IMR-90 (cell line): ENCODE measurements at regions of chr11 and their contacts with region 1.

Region 1: DNA sequence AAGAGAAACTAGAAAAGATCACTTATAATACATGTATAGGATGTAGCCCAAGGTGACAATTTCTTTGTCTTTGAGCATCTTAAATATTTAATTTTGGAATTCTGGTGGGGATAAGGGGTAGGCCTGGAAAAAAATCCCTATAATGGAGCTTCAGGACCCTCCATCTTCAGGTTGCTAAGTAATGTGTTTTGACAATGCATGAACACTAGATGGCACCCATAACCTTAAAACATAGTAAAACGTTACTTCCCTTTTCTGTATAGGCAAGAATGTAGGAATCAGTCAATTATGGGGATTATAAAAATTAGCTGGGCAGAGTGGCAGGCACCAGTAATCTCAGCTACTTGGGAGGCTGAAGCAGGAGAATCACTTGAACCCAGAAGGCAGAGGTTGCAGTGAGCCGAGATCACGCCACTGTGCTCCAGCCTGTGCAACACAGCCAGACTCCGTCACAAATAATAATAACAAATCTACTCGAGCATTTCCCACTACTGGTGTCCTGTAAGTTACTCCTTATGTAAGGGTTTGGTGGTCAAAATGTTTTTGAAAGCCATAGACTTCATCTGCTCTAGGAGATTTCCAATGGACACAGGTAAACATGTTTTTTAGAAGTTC is 541.9 kb upstream of the CCDC90B start:
- DNase-seq: peak; percentile 52
- ATAC-seq: peak; percentile 83
- H3K4me3 ChIP-seq: peak overlapping the region; percentile 29; the same call in 1 of the 2 replicates
- H3K27ac ChIP-seq: peak overlapping the region; percentile 74
- H3K4me1 ChIP-seq: peaks cover 8% of the 10 kb centered on the region
- H3K27me3 ChIP-seq: no peaks in the 10 kb centered on the region
- CTCF ChIP-seq: peak; percentile 60
- POLR2A ChIP-seq: no peak
- RAD21 ChIP-seq: peak; percentile 50

Region 2: GRCh38 chr11:83599066-83599465 is 229.0 kb before region 1 on chr11:
- CTCF ChIA-PET with region 1: no interaction called
- POLR2A ChIA-PET with region 1: no interaction called
- dilution Hi-C with region 1: no loop called
- in situ Hi-C with region 1: no loop called
- intact Hi-C with region 1: no loop called
- DNase-seq: no peak
- ATAC-seq: no peak
- H3K4me3 ChIP-seq: no peak overlapping the region
- H3K27ac ChIP-seq: no peak overlapping the region
- H3K4me1 ChIP-seq: no peaks in the 10 kb centered on the region
- H3K27me3 ChIP-seq: peaks cover 2% of the 10 kb centered on the region; the same call in 1 of the 2 replicates
- CTCF ChIP-seq: no peak
- POLR2A ChIP-seq: no peak
- RAD21 ChIP-seq: no peak

Region 3: GRCh38 chr11:84524422-84525051 is 696.5 kb after region 1 on chr11:
- CTCF ChIA-PET with region 1: no interaction called
- POLR2A ChIA-PET with region 1: no interaction called
- dilution Hi-C with region 1: no loop called
- in situ Hi-C with region 1: no loop called
- intact Hi-C with region 1: loop called (anchors 2 kb)
- DNase-seq: peak; percentile 25
- ATAC-seq: no peak
- H3K4me3 ChIP-seq: no peak overlapping the region
- H3K27ac ChIP-seq: no peak overlapping the region
- H3K4me1 ChIP-seq: no peaks in the 10 kb centered on the region
- H3K27me3 ChIP-seq: no peaks in the 10 kb centered on the region
- CTCF ChIP-seq: peak; percentile 49
- POLR2A ChIP-seq: no peak
- RAD21 ChIP-seq: peak; percentile 52

Region 4: DNA sequence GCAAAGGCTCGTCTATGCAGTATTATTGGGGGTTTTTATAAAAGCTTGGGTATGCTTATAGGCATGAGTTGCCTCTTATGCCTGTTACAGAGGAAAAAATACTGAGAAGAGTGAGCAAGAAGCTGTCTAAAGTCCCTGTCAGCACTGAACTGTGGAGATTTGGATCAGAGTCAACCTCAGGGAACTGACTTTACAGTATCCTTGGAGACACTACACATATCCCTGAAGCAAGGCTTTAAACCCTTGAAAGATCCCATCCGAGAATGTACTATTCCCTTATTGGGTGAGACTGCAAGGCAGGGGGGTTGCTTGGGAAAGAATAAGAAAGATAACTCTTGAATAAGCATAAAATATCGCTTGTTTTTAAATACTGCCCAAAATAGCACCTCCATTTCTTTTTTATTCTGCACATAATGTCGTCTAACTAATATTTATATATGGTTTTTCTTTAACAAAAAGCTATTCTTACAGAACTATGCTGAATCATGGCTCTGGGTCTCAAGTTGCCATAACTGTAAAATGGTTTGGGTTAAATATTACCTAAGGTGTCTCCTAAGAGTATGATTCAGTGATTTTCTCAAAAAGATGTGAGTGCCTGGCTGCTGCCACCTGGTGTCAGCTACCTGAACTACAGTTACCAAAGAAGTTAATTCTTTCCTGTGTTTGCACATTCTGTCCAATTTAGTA is 736.3 kb after region 1 on chr11:
- CTCF ChIA-PET with region 1: interaction called, 6 read pairs
- POLR2A ChIA-PET with region 1: no interaction called
- dilution Hi-C with region 1: no loop called
- in situ Hi-C with region 1: loop called (anchors 10 kb)
- intact Hi-C with region 1: loop called (anchors 2 kb)
- DNase-seq: peak; percentile 44
- ATAC-seq: peak; percentile 83; the same call in 1 of the 2 replicates
- H3K4me3 ChIP-seq: no peak overlapping the region
- H3K27ac ChIP-seq: no peak overlapping the region
- H3K4me1 ChIP-seq: no peaks in the 10 kb centered on the region
- H3K27me3 ChIP-seq: no peaks in the 10 kb centered on the region
- CTCF ChIP-seq: peak; percentile 74
- POLR2A ChIP-seq: no peak
- RAD21 ChIP-seq: peak; percentile 53